Calu3 (cell line): ENCODE measurements at regions of chr2 and their contacts with region 1.

Region 1: DNA sequence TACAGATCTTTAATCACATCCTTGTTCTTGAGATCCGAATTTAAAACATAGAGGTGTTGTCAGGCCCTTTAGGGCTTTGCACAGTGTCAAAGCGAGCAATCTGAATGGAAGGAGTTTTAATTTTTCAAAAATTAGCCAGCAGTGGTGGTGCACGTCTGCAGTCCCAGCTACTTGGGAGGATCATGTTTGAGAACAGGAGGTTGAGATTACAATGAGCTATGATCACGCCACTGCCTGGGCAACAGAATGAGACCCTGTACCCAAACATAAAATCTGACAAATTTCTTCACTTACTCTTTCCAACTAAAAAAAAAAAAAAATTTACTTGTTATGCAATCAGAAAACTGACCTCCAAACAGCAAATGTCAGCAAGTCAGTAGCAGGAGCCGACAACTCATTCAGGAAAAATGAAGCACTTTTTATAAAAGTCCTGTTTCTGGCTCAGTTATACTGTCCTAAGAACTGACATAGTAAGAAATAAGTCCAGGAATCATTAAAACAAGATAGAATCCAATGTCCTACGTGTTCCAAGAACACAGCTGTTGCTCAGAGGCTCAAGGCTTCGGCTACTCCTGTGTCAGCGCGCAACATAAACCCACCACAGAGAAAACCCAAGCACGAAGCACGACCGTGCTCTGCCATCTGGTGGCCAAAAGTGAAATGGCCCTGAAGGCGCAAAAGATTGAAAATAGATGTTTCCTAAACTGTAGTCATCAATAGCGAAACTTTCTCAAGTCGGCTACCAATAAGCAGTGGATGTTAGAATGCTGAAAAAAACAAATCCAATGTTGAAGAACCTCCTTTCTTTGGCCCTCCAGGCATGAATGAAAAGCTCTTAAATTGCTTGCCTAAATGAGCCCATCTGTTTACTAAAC is 138.1 kb downstream of the INO80D start:
- DNase-seq: peak; percentile 67
- H3K4me3 Mint-ChIP-seq: no peak overlapping the region
- H3K27ac Mint-ChIP-seq: no peak overlapping the region
- H3K4me1 Mint-ChIP-seq: peaks cover 26% of the 10 kb centered on the region
- H3K27me3 Mint-ChIP-seq: no peaks in the 10 kb centered on the region
- CTCF ChIP-seq: peak; percentile 93

Region 2: GRCh38 chr2:205903638-205904037 is 44.2 kb before region 1 on chr2:
- CTCF ChIA-PET with region 1: no interaction called
- intact Hi-C with region 1: loop called (anchors 2 kb)
- DNase-seq: peak; percentile 56
- H3K4me3 Mint-ChIP-seq: no peak overlapping the region
- H3K27ac Mint-ChIP-seq: no peak overlapping the region
- H3K4me1 Mint-ChIP-seq: no peaks in the 10 kb centered on the region
- H3K27me3 Mint-ChIP-seq: peaks cover 24% of the 10 kb centered on the region
- CTCF ChIP-seq: peak; percentile 62

Region 3: DNA sequence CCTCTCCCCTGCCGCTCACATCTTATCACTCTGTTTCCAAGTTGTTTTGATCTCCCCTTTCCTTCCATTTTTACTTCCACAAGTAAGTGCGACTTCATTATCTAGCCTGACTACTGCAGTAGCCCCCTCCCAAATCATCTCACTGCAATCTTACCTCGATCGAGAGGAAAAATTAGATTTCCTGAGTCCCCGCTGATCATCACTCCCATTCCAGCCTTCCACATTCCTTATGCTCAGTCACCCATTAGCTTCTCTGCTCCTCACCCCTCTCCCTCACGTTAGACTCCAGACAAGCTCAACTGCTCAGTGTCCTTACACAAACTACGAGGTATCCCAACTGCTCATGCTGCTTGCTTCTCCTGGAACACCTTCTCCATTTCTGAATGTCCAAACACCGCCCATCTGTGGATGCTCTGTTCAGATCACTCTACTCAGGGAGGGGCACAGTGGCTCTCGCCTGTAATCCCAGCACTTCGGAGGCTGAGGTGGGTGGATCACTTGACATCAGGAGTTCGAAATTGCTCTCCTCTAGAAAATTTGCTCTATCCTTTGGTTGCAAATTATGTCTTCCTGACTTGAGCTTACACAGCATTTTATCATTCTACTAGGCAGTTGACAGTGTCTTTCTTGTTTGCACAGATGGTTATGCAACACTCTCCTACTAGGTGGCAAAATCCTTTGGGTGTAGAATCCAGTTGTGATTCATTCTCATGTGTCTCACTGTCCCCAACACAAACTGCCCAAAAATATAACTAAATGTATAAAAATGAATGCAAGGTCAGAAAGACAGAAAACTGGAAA is 41.6 kb after region 1 on chr2:
- CTCF ChIA-PET with region 1: interaction called, 10 read pairs
- intact Hi-C with region 1: no loop called
- DNase-seq: no peak
- H3K4me3 Mint-ChIP-seq: no peak overlapping the region
- H3K27ac Mint-ChIP-seq: peak overlapping the region; percentile 19
- H3K4me1 Mint-ChIP-seq: peaks cover 8% of the 10 kb centered on the region
- H3K27me3 Mint-ChIP-seq: no peaks in the 10 kb centered on the region
- CTCF ChIP-seq: no peak

Region 4: DNA sequence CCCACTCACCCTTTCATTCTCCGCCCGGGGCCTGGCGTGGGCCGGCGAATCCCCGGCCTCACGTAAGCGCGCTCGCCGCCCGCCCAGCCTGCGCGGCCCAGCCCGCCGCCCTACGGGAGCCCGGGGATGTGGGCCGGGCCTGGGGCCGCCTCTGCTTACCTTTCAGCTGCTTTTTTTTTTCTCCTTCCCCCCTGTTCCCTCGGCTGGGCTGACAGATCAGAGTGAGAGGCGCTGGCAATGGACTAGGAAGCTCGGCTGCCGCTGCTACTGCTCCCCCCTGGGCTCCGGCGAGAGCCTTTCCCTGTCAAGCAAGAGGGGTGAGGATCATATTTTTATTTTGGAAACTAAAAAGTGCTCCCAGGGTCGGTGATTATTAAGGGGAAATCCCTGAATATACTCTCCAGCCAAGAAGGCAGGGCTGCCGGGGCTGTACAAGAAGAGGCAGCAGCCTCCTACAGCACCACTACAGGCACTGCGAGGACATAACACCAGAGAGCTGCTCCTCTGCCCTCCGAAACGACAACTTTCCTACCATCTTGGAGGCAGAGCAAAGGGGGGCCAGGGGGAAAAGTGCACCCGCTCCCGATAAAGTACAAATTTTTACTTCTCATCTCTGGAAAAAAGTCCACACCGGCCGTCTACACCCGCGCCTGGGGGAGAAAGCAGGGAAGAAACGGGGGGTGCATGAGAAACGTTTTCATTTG is 138.0 kb after region 1 on chr2 and contains the start of gene INO80D:
- CTCF ChIA-PET with region 1: no interaction called
- intact Hi-C with region 1: loop called (anchors 10 kb)
- DNase-seq: peak; percentile 74
- H3K4me3 Mint-ChIP-seq: peak within 1 kb of the TSS; percentile 93
- H3K27ac Mint-ChIP-seq: peak within 1 kb of the TSS; percentile 98
- H3K4me1 Mint-ChIP-seq: peaks cover 22% of the 10 kb centered on the region
- H3K27me3 Mint-ChIP-seq: no peaks in the 10 kb centered on the region
- CTCF ChIP-seq: peak; percentile 53
- total RNA-seq, gene INO80D: 19.5 and 20.2 TPM in 2 replicates

Region 5: GRCh38 chr2:206840999-206841398 is 893.1 kb after region 1 on chr2:
- CTCF ChIA-PET with region 1: no interaction called
- intact Hi-C with region 1: no loop called
- DNase-seq: no peak
- H3K4me3 Mint-ChIP-seq: no peak overlapping the region
- H3K27ac Mint-ChIP-seq: no peak overlapping the region
- H3K4me1 Mint-ChIP-seq: no peaks in the 10 kb centered on the region
- H3K27me3 Mint-ChIP-seq: no peaks in the 10 kb centered on the region
- CTCF ChIP-seq: no peak